ENCODE measurements at regions of chr20 and their contacts with region 1.

Region 1: DNA sequence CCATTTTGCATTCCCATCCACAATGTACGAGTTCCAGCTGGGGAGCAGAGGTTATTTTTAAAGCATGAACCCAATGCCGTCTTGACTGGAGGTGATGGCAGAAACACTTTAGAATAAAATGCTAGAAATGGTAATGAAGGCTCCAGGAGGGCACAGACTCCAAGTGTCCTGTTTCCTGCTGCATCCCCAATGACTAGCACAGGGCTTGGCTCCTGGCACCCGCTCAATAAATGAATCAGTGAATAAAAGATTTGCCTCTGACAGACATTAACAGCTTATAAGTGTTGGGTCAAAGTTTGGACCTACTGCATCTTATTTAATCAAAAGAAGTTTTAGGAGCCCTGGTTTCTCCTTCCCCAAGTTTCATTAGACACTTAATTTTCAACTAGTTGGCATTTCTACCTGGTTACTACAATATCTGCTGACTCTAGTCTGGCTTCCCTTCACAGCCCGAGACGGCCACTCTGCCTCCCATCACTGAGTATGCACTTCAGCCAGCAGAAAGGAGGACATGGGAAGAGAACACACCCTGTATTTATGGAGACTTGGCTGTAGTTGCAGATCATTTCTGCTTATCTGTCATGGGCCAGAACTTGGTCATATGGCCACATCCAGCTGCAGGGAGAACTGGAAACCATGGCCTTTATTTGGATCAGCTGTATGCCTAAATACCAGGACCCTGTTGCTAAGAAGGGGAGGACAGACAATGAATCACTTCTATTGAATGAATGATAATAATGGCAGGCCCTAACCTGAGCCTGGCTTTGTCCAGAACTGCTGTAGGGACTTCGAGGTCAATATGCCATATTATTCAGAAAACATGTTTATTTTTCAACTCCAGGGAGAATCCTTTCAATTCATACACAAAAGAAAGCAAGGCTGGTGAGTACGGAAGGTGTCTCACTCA is 63.1 kb downstream of the TTI1 start:
- DNase-seq: no peak
- ATAC-seq: no peak
- H3K4me3 ChIP-seq: no peak overlapping the region
- H3K27ac ChIP-seq: no peak overlapping the region
- H3K4me1 ChIP-seq: no peaks in the 10 kb centered on the region
- H3K27me3 ChIP-seq: no peaks in the 10 kb centered on the region
- CTCF ChIP-seq: no peak

Region 2: GRCh38 chr20:37822141-37822601 is 148.0 kb before region 1 on chr20:
- intact Hi-C with region 1: no loop called
- DNase-seq: no peak
- ATAC-seq: no peak
- H3K4me3 ChIP-seq: no peak overlapping the region
- H3K27ac ChIP-seq: no peak overlapping the region
- H3K4me1 ChIP-seq: no peaks in the 10 kb centered on the region
- H3K27me3 ChIP-seq: no peaks in the 10 kb centered on the region
- CTCF ChIP-seq: no peak

Region 3: GRCh38 chr20:37911838-37912281 is 58.3 kb before region 1 on chr20:
- intact Hi-C with region 1: loop called in 1 of 2 experiments (anchors 10 kb)
- DNase-seq: peak in 1 of 4 donors; percentile 41
- ATAC-seq: peak; percentile 18
- H3K4me3 ChIP-seq: no peak overlapping the region
- H3K27ac ChIP-seq: no peak overlapping the region
- H3K4me1 ChIP-seq: peaks cover 8 to 9% of the 10 kb centered on the region in 2 donors
- H3K27me3 ChIP-seq: peaks cover 0 to 94% of the 10 kb centered on the region in 2 donors
- CTCF ChIP-seq: no peak

Region 4: DNA sequence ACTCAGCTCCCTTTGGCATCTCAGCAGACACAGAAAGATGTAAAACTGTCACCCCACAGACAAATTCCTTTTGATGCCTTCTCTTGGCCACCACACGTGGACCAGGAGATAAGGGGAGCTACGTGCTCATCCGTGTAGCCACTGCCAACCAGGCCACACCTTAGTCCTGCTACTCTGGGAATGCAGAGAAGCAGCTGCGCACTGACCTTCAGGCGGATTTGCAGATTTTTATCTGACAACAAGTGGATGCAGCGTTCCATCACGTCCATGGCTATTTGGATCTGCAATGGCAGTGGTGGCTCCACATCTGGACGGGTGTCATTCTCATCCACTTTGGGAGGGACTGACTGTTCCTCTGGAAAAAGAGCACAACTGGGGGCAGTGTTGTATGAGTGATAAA is 32.2 kb after region 1 on chr20:
- intact Hi-C with region 1: no loop called
- DNase-seq: no peak
- ATAC-seq: no peak
- H3K4me3 ChIP-seq: no peak overlapping the region
- H3K27ac ChIP-seq: no peak overlapping the region
- H3K4me1 ChIP-seq: no peaks in the 10 kb centered on the region
- H3K27me3 ChIP-seq: no peaks in the 10 kb centered on the region
- CTCF ChIP-seq: no peak

Region 5: DNA sequence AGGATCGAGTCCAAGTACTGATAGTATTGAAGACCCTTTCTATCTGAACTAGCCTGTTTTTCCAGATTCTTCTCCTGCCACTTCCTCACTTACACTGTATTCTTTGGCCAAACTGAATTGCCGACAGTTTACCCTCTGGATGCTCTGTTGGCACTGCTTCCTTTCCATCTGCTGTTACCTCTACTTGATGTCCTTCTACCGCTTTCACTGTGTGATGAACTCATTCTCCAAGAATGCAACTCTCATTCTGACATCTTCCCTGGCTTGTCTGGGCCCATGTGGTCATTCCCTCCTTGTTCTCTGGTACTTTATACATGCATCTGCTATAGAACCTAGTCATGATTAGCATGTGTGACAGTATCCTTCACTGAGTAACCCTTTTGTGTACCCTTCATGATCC is 79.6 kb after region 1 on chr20:
- intact Hi-C with region 1: no loop called
- DNase-seq: no peak
- ATAC-seq: peak; percentile 41
- H3K4me3 ChIP-seq: no peak overlapping the region
- H3K27ac ChIP-seq: peak overlapping the region; percentile 5
- H3K4me1 ChIP-seq: peaks cover 0 to 17% of the 10 kb centered on the region in 2 donors
- H3K27me3 ChIP-seq: no peaks in the 10 kb centered on the region
- CTCF ChIP-seq: no peak